Panc1 (cell line): ENCODE measurements at regions of chr17 and their contacts with region 1.

Region 1: GRCh38 chr17:61037822-61038221 is 360.2 kb downstream of the BCAS3 start:
- DNase-seq: no peak
- ATAC-seq: no peak
- H3K4me3 ChIP-seq: no peak overlapping the region
- H3K27ac ChIP-seq: no peak overlapping the region
- H3K4me1 ChIP-seq: no peaks in the 10 kb centered on the region
- H3K27me3 ChIP-seq: no peaks in the 10 kb centered on the region
- CTCF ChIP-seq: no peak

Region 2: DNA sequence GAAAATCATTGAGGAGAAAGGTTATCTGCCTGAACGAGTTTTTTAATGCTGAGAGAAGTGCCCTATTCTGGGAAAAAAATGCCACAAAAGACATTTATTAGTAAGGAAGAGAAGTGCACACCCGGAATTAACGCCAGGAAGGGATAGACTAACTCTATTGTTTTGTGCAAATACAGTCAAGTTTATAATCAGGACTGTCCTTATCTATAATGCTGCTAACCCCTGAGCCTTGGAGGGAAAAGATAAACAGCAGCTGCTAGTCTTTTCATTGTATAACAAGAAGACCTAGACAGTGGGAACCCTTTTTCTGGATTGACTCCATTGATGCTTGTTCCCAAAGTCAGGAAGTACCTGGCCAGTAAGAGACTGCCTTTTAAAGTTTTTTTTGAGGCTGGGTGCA is 333.7 kb before region 1 on chr17:
- CTCF ChIA-PET with region 1: no interaction called
- POLR2A ChIA-PET with region 1: interaction called, 11 read pairs
- in situ Hi-C with region 1: no loop called
- intact Hi-C with region 1: no loop called
- DNase-seq: no peak
- ATAC-seq: no peak
- H3K4me3 ChIP-seq: no peak overlapping the region
- H3K27ac ChIP-seq: no peak overlapping the region
- H3K4me1 ChIP-seq: no peaks in the 10 kb centered on the region
- H3K27me3 ChIP-seq: no peaks in the 10 kb centered on the region
- CTCF ChIP-seq: no peak